Sigmoid colon (tissue), 7 donors: ENCODE measurements at regions of chr15 and their contacts with region 1.

Region 1: DNA sequence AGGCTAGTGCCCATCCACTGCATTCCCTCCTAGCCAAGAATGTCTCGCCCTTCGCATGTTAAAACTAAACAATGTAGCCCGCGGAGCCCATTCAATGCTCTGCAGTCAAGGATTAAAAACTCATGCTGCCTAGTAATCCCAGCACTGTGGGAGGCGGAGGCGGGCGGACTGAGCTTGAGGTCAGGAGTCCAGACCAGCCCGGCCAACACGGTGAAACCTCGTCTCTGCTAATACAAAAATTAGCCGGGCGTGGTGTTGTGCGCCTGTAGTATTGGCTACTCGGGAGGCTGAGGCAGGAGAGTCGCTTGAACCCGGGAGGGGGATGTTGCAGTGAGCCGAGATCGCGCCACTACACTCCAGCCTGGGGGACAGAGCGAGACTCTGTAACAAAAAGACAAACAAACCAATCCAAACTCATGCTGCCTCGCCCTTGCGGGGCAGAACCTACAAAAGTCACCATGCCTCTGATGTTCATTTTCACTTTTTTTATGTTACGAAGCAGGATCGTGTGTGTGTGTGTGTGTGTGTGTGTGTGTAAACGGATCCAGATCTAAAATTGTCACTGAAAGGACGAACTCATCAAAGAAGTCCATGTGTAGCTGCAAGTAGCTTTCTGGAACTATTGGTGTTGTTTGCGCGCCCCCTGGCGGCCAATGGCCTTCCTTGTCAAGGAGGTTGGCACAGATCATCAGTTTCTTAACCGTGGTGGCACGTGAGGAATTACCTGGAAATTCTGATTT is 54.8 kb upstream of the SPESP1 start:
- DNase-seq: peak; percentile 95
- H3K4me3 ChIP-seq: peak overlapping the region in 3 of 4 donors; percentile 29 to 47 (median 45)
- H3K27ac ChIP-seq: no peak overlapping the region
- H3K4me1 ChIP-seq: peaks cover 0 to 7% (median 3%) of the 10 kb centered on the region in 4 donors
- H3K27me3 ChIP-seq: peaks cover 0 to under 1% (median 0%) of the 10 kb centered on the region in 3 donors
- CTCF ChIP-seq: peak; percentile 82 to 91 (median 88)
- EP300 ChIP-seq: no peak
- POLR2A ChIP-seq: no peak

Region 2: DNA sequence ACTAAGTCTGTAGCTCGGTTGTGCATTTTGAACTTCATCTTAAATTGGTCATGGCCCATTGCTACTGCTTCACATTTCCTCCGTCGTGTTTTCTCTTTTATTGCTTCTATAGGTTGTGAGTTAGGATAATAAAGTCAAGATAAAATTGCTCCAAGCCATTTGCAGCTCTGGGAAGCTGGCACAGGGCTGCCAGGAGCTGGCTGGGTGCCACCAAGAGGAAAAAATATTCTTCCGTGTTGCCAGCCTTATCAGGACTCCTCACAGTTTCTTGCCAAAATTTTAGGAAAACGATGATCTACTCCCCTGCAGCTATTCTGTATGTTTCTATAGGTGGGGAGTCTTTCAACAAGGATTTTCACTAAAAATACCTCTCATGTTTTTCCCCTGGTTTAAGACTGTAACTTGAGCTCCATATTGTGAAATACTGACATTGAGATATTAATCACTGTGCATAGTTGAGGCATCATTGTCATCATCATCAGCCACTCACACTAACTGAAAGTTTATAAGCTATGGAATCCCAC is 876.9 kb before region 1 on chr15:
- intact Hi-C with region 1: no loop called
- DNase-seq: no peak
- H3K4me3 ChIP-seq: no peak overlapping the region
- H3K27ac ChIP-seq: no peak overlapping the region
- H3K4me1 ChIP-seq: peaks cover 0 to 26% (median 16%) of the 10 kb centered on the region in 4 donors
- H3K27me3 ChIP-seq: no peaks in the 10 kb centered on the region
- CTCF ChIP-seq: no peak
- EP300 ChIP-seq: no peak
- POLR2A ChIP-seq: no peak

Region 3: GRCh38 chr15:68550481-68551295 is 324.9 kb before region 1 on chr15:
- intact Hi-C with region 1: loop called (anchors 2 kb)
- DNase-seq: peak; percentile 84
- H3K4me3 ChIP-seq: no peak overlapping the region
- H3K27ac ChIP-seq: no peak overlapping the region
- H3K4me1 ChIP-seq: no peaks in the 10 kb centered on the region
- H3K27me3 ChIP-seq: peaks cover 0 to 13% (median 3%) of the 10 kb centered on the region in 3 donors
- CTCF ChIP-seq: peak; percentile 58 to 94 (median 76)
- EP300 ChIP-seq: no peak
- POLR2A ChIP-seq: no peak

Region 4: DNA sequence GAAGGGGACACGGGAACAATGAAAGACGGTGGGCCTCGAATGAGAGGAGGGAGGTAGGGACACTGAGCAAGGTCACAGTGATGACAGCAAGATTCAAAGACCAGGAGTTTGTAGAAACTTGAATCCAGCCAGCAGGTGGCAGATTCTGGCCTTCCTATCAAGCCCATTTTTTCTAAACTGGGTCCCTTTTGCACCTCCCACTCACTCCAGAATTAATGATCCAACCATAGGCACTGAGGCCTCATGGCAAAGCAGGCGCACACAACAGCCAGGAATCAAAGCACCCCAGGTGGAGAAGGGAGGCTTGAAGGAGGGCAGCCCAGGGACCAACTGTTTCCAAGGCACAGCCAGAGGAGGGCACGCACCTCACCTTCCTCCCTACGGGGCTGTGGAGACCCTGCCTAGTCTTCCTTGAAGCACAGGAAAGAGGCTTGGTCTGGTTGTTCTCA is 145.1 kb before region 1 on chr15:
- intact Hi-C with region 1: loop called (anchors 1 kb)
- DNase-seq: peak; percentile 65
- H3K4me3 ChIP-seq: peak overlapping the region in 1 of 4 donors; percentile 12
- H3K27ac ChIP-seq: peak overlapping the region; percentile 44 to 81 (median 56)
- H3K4me1 ChIP-seq: peaks cover 0 to 21% (median 14%) of the 10 kb centered on the region in 4 donors
- H3K27me3 ChIP-seq: no peaks in the 10 kb centered on the region
- CTCF ChIP-seq: peak in 3 of 4 experiments; percentile 49 to 57 (median 57)
- EP300 ChIP-seq: no peak
- POLR2A ChIP-seq: no peak

Region 5: DNA sequence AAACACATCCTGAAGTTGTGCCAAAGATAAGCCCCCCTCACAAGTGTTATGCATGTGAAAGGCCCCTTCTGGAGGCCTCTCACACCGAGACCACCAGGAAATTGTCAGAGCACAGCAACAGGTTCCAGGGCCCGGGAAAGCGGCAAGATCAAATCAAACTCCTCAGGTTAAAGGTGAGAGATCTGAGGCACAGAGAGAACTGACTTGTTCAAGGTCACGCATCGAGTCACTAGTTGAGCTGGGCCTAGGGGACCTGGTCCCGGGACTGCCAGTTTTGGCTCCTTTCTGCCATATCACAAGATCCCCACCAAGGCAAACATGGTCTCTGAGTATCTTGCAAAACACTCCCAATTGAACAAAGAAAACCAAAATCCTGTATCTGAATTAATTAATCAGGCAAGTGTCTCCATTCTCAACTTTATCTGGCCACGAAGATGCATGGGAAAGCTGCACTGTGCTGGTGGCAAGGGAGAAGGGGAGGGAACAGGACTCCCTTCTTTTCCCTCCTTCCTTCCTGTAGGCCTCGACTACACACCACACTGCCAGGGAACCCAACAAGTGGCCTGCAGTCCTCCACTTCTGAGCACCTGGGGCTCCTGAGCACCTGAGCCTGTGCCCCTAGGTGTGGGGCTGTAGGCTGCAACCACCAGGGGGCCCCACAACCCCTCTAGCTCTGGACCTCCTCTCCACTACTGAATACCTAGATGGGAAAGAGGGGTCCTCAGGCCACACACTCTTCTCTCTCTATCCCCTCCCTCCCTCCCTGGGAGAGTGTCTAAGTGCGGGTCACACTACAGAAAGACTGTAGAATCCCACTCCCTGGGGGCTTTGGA is 92.1 kb before region 1 on chr15:
- intact Hi-C with region 1: loop called (anchors 2 kb)
- DNase-seq: peak; percentile 63
- H3K4me3 ChIP-seq: no peak overlapping the region
- H3K27ac ChIP-seq: no peak overlapping the region
- H3K4me1 ChIP-seq: no peaks in the 10 kb centered on the region
- H3K27me3 ChIP-seq: no peaks in the 10 kb centered on the region
- CTCF ChIP-seq: peak; percentile 37 to 71 (median 56)
- EP300 ChIP-seq: no peak
- POLR2A ChIP-seq: no peak

Region 6: GRCh38 chr15:68820295-68821189 is 55.0 kb before region 1 on chr15 and contains the start of gene ANP32A:
- intact Hi-C with region 1: loop called (anchors 5 kb)
- DNase-seq: peak; percentile 98
- H3K4me3 ChIP-seq: peak within 1 kb of the TSS; percentile 77 to 98 (median 97)
- H3K27ac ChIP-seq: peak within 1 kb of the TSS; percentile 92 to 99 (median 98)
- H3K4me1 ChIP-seq: peaks cover 0 to 30% (median 25%) of the 10 kb centered on the region in 4 donors
- H3K27me3 ChIP-seq: no peaks in the 10 kb centered on the region
- CTCF ChIP-seq: no peak
- EP300 ChIP-seq: no peak
- POLR2A ChIP-seq: peak in 1 of 2 donors; percentile 87
- total RNA-seq, gene ANP32A: 37.6 to 71.2 (median 58.9) TPM